SK-N-SH (cell line): ENCODE measurements at regions of chr2 and their contacts with region 1.

Region 1: DNA sequence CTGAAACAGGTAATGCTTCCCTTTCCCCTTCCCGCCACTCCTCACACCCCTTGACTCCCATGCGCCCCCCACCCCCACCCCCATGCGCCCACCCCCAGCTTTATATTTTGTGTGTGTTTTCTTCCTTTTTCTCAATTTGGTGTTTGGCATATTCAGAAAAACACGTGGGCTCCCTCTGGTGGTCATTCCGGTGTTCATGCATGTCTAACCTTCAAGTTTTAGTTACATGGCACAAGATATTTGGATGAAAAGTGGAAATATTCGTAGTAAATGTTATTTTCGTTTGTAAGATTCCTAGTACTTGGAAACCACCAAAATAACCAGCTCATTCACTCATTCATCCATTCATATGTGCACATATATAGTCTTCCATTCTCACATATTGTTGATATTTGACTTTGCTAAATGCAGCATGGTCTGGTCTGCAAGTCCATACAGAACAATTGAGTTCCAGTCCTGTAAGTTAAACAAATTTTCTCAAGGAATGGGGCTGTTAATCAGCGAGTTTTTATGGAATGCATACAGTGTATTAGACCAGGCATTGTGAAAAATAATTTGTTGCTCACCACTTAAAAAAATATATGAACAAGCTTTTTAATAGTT is 143.6 kb upstream of the MAP3K20 start:
- DNase-seq: peak; percentile 50
- H3K4me3 ChIP-seq: no peak overlapping the region
- H3K27ac ChIP-seq: peak overlapping the region in 1 of 2 experiments; percentile 95; a peak in 2 of 4 replicates
- H3K4me1 ChIP-seq: peaks cover 0 to 32% of the 10 kb centered on the region in 2 experiments; a peak in 2 of 4 replicates
- H3K27me3 ChIP-seq: no peaks in the 10 kb centered on the region
- CTCF ChIP-seq: peak; percentile 78
- EP300 ChIP-seq: no peak
- RAD21 ChIP-seq: peak; percentile 87

Region 2: DNA sequence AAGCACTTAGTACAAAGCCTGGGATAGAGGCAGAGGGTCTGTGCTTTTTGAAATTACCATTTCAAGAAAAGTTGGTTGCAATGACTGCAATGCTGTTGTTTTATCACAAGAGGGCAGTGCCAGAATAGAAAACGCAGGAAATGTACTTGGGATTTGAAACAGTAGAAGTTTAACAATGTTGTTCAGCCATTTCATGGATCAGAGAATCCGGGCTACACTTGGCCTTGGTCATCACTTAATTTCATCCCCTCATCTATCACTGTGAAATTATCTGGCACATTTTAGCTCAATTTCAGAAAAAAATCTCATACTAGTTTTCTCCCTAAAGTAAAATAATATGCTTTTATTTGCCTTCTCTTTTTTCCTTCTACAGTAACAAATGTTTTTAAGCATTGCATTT is 125.5 kb before region 1 on chr2:
- CTCF ChIA-PET with region 1: interaction called, 174 read pairs
- POLR2A ChIA-PET with region 1: interaction called, 3 read pairs
- DNase-seq: peak; percentile 50
- H3K4me3 ChIP-seq: peak overlapping the region in 1 of 2 experiments; percentile 46; a peak in 1 of 4 replicates
- H3K27ac ChIP-seq: peak overlapping the region in 1 of 2 experiments; percentile 53; a peak in 2 of 4 replicates
- H3K4me1 ChIP-seq: peaks cover 0 to 20% of the 10 kb centered on the region in 2 experiments; a peak in 2 of 4 replicates
- H3K27me3 ChIP-seq: no peaks in the 10 kb centered on the region
- CTCF ChIP-seq: peak; percentile 95
- EP300 ChIP-seq: no peak
- RAD21 ChIP-seq: peak; percentile 99

Region 3: GRCh38 chr2:172845028-172845630 is 86.9 kb before region 1 on chr2:
- CTCF ChIA-PET with region 1: interaction called, 55 read pairs
- POLR2A ChIA-PET with region 1: no interaction called
- DNase-seq: no peak
- H3K4me3 ChIP-seq: no peak overlapping the region
- H3K27ac ChIP-seq: peak overlapping the region in 1 of 2 experiments; percentile 60; a peak in 2 of 4 replicates
- H3K4me1 ChIP-seq: peaks cover 0 to 48% of the 10 kb centered on the region in 2 experiments; a peak in 2 of 4 replicates
- H3K27me3 ChIP-seq: no peaks in the 10 kb centered on the region
- CTCF ChIP-seq: no peak
- EP300 ChIP-seq: no peak
- RAD21 ChIP-seq: no peak

Region 4: DNA sequence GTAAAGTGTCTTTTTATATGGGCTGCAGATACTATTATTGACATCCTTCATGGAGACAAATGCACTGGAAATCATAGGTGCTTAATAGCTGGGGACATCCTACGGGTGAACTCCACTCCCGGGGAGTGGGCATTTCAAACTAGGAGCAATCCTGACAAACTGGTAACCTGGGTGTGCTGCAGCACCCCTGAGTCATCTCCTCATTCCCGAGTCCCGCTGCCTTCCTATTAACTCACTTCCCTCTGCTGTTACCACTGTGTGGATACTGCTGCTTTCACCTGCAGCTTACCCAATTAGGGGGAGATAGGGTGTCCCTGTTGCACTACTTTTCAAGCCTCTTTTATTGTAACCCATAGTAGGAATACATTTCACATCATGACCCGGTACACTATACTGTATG is 62.2 kb before region 1 on chr2:
- CTCF ChIA-PET with region 1: interaction called, 98 read pairs
- POLR2A ChIA-PET with region 1: no interaction called
- DNase-seq: no peak
- H3K4me3 ChIP-seq: no peak overlapping the region
- H3K27ac ChIP-seq: peak overlapping the region in 1 of 2 experiments; percentile 40; a peak in 2 of 4 replicates
- H3K4me1 ChIP-seq: peaks cover 0 to 12% of the 10 kb centered on the region in 2 experiments; a peak in 2 of 4 replicates
- H3K27me3 ChIP-seq: no peaks in the 10 kb centered on the region
- CTCF ChIP-seq: no peak
- EP300 ChIP-seq: no peak
- RAD21 ChIP-seq: no peak

Region 5: DNA sequence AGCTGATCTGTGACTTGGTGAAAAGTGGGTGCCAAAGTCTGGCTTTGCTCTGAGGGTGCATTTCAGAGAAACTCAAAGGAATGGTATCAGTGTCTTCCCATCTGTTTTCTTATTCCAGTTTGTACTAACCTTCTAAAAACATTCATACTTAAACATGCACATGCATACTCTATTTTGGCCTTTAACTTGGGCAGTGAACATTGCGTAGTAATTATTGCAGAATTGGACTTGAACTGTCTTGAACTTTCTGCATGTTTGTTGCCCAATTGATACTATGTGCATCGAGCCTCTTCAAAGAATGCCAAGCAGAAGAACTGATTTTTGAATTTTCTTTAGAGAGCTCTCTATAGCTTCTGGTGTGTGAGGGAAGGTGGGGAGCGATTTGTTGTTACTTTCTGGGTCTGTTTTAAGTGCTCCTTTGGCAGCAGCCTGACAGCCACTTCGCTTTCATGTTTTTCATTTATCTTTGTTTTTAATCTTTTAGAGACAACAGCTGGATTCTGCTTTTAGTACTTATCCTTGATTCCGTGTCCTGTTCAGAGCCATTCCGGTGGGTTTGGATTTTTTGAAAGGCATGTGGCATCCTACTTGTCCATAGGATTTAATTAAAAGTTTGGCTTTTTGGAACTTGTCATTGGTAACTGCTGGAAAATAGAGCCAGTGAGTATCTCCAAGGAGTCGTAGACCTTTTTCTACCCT is 37.2 kb before region 1 on chr2:
- CTCF ChIA-PET with region 1: interaction called, 55 read pairs
- POLR2A ChIA-PET with region 1: interaction called, 3 read pairs
- DNase-seq: peak; percentile 29
- H3K4me3 ChIP-seq: no peak overlapping the region
- H3K27ac ChIP-seq: peak overlapping the region in 1 of 2 experiments; percentile 99; a peak in 2 of 4 replicates
- H3K4me1 ChIP-seq: peaks cover 0 to 58% of the 10 kb centered on the region in 2 experiments; a peak in 2 of 4 replicates
- H3K27me3 ChIP-seq: peaks cover 22% of the 10 kb centered on the region; the same call in 1 of the 2 replicates
- CTCF ChIP-seq: no peak
- EP300 ChIP-seq: peak in 1 of 2 experiments; percentile 65; a peak in 2 of 4 replicates
- RAD21 ChIP-seq: peak; percentile 21; the same call in 1 of the 2 replicates

Region 6: GRCh38 chr2:172921532-172922236 is 10.3 kb before region 1 on chr2:
- CTCF ChIA-PET with region 1: interaction called, 30 read pairs
- POLR2A ChIA-PET with region 1: no interaction called
- DNase-seq: no peak
- H3K4me3 ChIP-seq: no peak overlapping the region
- H3K27ac ChIP-seq: no peak overlapping the region
- H3K4me1 ChIP-seq: peaks cover 0 to 2% of the 10 kb centered on the region in 2 experiments; a peak in 1 of 4 replicates
- H3K27me3 ChIP-seq: no peaks in the 10 kb centered on the region
- CTCF ChIP-seq: no peak
- EP300 ChIP-seq: no peak
- RAD21 ChIP-seq: no peak

Region 7: DNA sequence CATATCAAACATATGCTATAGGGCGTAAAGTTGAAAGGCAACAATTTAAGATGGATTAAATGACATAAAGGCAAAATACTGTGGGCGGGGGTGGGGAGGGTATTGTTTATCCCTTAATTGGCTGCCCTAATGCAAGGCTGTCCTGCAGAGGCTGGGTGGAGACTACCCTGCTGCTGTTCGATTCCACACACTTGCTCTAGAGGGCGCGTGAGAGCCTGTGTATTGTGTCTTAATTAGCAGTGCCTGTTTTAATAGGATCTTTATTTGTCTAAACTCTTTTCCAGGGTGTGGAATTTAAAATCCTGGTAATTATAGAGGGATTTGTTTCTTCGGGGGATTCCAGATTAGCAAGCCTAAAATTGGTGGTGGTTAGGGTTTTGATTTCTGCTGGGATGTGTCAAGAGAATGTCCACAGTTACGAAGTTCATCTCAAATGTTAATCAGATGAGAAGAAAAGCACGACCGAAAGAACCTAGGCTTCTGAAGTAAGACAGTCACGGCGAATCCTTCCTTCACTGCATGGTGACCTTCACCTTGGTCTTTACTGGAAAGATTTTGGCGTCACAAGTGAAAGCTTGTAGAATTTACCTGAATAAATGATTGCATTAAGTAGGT is 40.1 kb after region 1 on chr2:
- CTCF ChIA-PET with region 1: interaction called, 19 read pairs
- POLR2A ChIA-PET with region 1: no interaction called
- DNase-seq: peak; percentile 43
- H3K4me3 ChIP-seq: no peak overlapping the region
- H3K27ac ChIP-seq: no peak overlapping the region
- H3K4me1 ChIP-seq: no peaks in the 10 kb centered on the region; a peak in 1 of 4 replicates
- H3K27me3 ChIP-seq: no peaks in the 10 kb centered on the region; the same call in 1 of the 2 replicates
- CTCF ChIP-seq: peak; percentile 65
- EP300 ChIP-seq: no peak
- RAD21 ChIP-seq: peak; percentile 38